Panc1 (cell line): ENCODE measurements at regions of chr12 and their contacts with region 1.

Region 1: GRCh38 chr12:39764944-39765560 is 145.4 kb upstream of the ABCD2 start:
- DNase-seq: peak; percentile 12
- ATAC-seq: no peak
- H3K4me3 ChIP-seq: no peak overlapping the region
- H3K27ac ChIP-seq: no peak overlapping the region
- H3K4me1 ChIP-seq: no peaks in the 10 kb centered on the region
- H3K27me3 ChIP-seq: no peaks in the 10 kb centered on the region
- CTCF ChIP-seq: peak; percentile 72; the same call in 1 of the 2 replicates

Region 2: DNA sequence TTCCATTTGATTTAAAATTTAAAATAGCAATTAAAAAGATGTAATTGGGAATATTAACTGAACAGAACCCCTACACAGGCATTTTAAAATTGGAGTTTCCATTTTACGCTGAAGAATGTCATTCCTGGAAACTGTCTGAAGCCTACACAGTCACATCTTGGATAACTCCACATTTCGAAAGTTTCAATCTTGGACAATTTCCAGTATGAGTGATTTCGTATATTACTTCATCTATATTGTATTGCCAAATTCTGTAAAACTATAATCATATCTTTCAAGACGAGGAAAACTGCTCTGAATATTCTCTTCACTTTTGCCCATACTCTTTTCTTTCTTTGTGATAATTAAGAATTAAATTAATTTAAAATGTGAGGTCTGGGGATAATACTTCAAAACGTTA is 48.7 kb after region 1 on chr12:
- CTCF ChIA-PET with region 1: no interaction called
- POLR2A ChIA-PET with region 1: no interaction called
- in situ Hi-C with region 1: no loop called
- intact Hi-C with region 1: no loop called
- DNase-seq: no peak
- ATAC-seq: no peak
- H3K4me3 ChIP-seq: no peak overlapping the region
- H3K27ac ChIP-seq: no peak overlapping the region
- H3K4me1 ChIP-seq: no peaks in the 10 kb centered on the region
- H3K27me3 ChIP-seq: no peaks in the 10 kb centered on the region
- CTCF ChIP-seq: no peak

Region 3: DNA sequence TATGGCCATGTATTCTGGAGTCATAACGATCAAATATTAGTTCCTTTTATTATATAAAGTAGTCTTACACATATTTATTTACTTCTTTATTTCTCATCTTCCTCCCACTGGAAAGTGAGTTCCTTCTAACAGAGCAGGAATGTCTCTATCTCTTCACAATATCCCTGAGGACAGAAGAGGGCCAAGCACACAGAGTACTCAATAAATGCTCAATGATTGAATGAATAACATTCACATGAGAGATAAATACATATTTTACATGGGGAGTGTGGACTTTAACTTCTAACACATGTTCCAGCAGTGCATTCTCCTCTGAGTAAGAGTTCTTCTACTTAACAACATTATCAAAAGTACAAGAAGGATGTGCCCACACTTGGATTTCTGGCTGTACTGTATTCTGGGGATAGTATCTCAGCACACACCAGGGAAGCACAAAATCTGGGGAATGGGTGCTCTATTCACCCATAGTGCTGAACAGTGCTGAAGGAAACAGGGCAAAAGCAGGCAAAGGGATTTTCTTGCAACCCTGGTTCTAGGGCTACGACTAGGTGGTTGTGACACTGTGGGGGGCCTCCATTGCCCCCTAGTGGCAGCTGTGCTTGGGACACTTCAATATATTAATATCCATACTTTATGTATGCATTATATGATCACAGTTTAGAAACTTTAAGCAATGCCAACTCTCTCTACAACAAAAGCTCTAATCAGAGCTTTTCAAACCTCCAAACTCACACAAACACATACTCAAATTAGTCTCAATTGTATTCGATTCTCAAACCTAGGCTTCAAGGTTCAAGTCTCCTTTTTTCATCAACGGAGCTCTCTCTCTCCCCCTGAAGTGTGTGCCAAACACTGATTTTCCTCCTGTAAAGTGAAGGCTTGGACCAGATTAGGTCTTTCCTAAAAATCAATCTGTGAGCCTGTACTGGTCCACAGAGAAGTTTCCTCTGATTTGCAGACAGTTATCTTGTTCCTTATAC is 225.4 kb after region 1 on chr12:
- CTCF ChIA-PET with region 1: no interaction called
- POLR2A ChIA-PET with region 1: no interaction called
- in situ Hi-C with region 1: no loop called
- intact Hi-C with region 1: loop called (anchors 1 kb)
- DNase-seq: peak; percentile 12
- ATAC-seq: peak; percentile 87
- H3K4me3 ChIP-seq: no peak overlapping the region
- H3K27ac ChIP-seq: no peak overlapping the region
- H3K4me1 ChIP-seq: no peaks in the 10 kb centered on the region
- H3K27me3 ChIP-seq: no peaks in the 10 kb centered on the region
- CTCF ChIP-seq: peak; percentile 89

Region 4: GRCh38 chr12:40325349-40325960 is 560.4 kb after region 1 on chr12:
- CTCF ChIA-PET with region 1: no interaction called
- POLR2A ChIA-PET with region 1: no interaction called
- in situ Hi-C with region 1: no loop called
- intact Hi-C with region 1: no loop called
- DNase-seq: peak; percentile 64
- ATAC-seq: peak; percentile 92
- H3K4me3 ChIP-seq: peak overlapping the region; percentile 9 to 32; a peak in 3 of 4 replicates
- H3K27ac ChIP-seq: no peak overlapping the region
- H3K4me1 ChIP-seq: no peaks in the 10 kb centered on the region
- H3K27me3 ChIP-seq: no peaks in the 10 kb centered on the region
- CTCF ChIP-seq: peak; percentile 84